K562 (cell line): ENCODE measurements at regions of chr1 and their contacts with region 1.

Region 1: GRCh38 chr1:223825767-223826748 is 19.7 kb downstream of the TP53BP2 start:
- DNase-seq: no peak
- ATAC-seq: peak; percentile 3; the same call in 1 of the 3 replicates
- H3K4me3 ChIP-seq: no peak overlapping the region
- H3K27ac ChIP-seq: no peak overlapping the region
- H3K4me1 ChIP-seq: peaks cover 6 to 27% of the 10 kb centered on the region in 2 experiments; a peak in 3 of 5 replicates
- H3K27me3 ChIP-seq: no peaks in the 10 kb centered on the region
- CTCF ChIP-seq: no peak
- EP300 ChIP-seq: no peak
- POLR2A ChIP-seq: no peak
- RAD21 ChIP-seq: no peak

Region 2: GRCh38 chr1:223788746-223789415 is 37.2 kb before region 1 on chr1:
- CTCF ChIA-PET with region 1: no interaction called
- POLR2A ChIA-PET with region 1: no interaction called
- in situ Hi-C with region 1: no loop called
- intact Hi-C with region 1: no loop called
- DNase-seq: peak; percentile 75 to 98 (median 84)
- ATAC-seq: peak; percentile 95
- H3K4me3 ChIP-seq: no peak overlapping the region
- H3K27ac ChIP-seq: peak overlapping the region; percentile 89
- H3K4me1 ChIP-seq: peaks cover 22 to 49% of the 10 kb centered on the region in 2 experiments
- H3K27me3 ChIP-seq: no peaks in the 10 kb centered on the region
- CTCF ChIP-seq: no peak
- EP300 ChIP-seq: peak; percentile 99
- POLR2A ChIP-seq: no peak; the same call in 1 of the 2 replicates
- RAD21 ChIP-seq: peak; percentile 20 to 43; a peak in 3 of 4 replicates

Region 3: DNA sequence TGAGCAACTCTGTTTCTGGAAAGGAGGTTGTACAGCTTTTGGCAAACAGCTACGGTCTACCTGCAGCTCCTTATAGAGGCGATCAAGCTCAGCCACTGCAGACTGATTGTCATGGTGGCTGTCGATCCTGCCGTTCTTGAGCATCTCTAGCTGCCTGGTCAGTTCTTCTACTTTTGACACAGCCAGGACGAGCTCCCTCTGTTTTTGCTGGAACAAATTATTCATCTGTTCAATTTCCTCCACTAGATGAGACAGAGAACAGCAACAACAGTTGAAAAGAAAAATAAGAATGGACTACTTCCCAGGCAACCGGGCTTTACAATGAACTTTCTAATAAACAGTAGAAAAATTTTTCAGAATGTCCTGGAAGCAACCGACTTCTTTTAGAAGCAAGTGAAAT is 22.8 kb before region 1 on chr1:
- CTCF ChIA-PET with region 1: no interaction called
- POLR2A ChIA-PET with region 1: no interaction called
- in situ Hi-C with region 1: no loop called
- intact Hi-C with region 1: no loop called
- DNase-seq: no peak
- ATAC-seq: no peak
- H3K4me3 ChIP-seq: no peak overlapping the region
- H3K27ac ChIP-seq: no peak overlapping the region
- H3K4me1 ChIP-seq: no peaks in the 10 kb centered on the region
- H3K27me3 ChIP-seq: no peaks in the 10 kb centered on the region
- CTCF ChIP-seq: no peak
- EP300 ChIP-seq: no peak
- POLR2A ChIP-seq: no peak
- RAD21 ChIP-seq: no peak

Region 4: DNA sequence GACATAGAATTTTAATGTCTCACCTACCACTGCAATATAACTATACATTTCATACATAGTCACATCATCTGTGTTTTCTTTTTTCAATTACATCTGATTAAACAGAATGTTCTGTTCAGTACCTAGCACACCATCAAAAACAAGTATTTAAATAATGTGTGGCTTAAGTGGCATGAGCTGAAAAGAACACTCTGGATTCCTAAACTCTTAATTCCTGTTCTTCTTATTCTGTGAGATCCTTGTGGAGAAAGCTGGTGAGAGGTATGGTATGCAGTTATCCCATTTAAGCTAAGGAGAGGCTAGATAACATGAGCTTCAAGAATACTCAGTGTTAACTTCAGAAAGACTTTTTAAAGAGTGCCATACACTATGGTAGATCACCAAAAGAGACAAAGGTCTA is 14.2 kb after region 1 on chr1:
- CTCF ChIA-PET with region 1: no interaction called
- POLR2A ChIA-PET with region 1: interaction called, 14 read pairs
- in situ Hi-C with region 1: no loop called
- intact Hi-C with region 1: no loop called
- DNase-seq: no peak
- ATAC-seq: peak; percentile 2; the same call in 2 of the 3 replicates
- H3K4me3 ChIP-seq: no peak overlapping the region
- H3K27ac ChIP-seq: peak overlapping the region; percentile 28; the same call in 1 of the 3 replicates
- H3K4me1 ChIP-seq: peaks cover 12 to 63% of the 10 kb centered on the region in 2 experiments
- H3K27me3 ChIP-seq: no peaks in the 10 kb centered on the region
- CTCF ChIP-seq: no peak
- EP300 ChIP-seq: no peak
- POLR2A ChIP-seq: no peak
- RAD21 ChIP-seq: no peak